Right cardiac atrium (tissue), 5 donors: ENCODE measurements at regions of chr20 and their contacts with region 1.

Region 1: GRCh38 chr20:37192137-37192854 is 12.9 kb upstream of the MROH8 start:
- DNase-seq: peak; percentile 90 to 96 (median 93)
- ATAC-seq: peak; percentile 89 to 90
- H3K4me3 ChIP-seq: no peak overlapping the region
- H3K27ac ChIP-seq: no peak overlapping the region
- H3K4me1 ChIP-seq: no peaks in the 10 kb centered on the region
- H3K27me3 ChIP-seq: no peaks in the 10 kb centered on the region

Region 2: DNA sequence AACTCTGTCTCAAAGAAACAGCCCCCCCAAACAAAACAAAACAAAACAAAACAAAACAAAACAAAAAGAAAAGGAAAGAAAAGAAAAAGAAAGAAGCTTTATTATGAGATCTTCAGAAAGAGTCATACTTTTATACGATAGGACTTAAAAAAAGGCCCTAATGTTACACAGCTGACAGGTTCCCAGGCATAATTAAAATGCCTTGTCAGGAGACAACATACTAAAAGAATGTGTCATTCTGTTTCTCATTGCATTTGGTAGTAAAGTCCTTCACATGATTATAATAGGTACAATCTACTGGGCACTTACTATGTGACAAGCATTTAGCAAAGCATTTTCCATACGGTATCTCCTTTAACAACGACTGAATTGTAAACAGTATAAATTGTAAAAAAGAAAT is 49.6 kb before region 1 on chr20:
- intact Hi-C with region 1: no loop called
- DNase-seq: no peak
- ATAC-seq: no peak
- H3K4me3 ChIP-seq: no peak overlapping the region
- H3K27ac ChIP-seq: no peak overlapping the region
- H3K4me1 ChIP-seq: no peaks in the 10 kb centered on the region
- H3K27me3 ChIP-seq: no peaks in the 10 kb centered on the region

Region 3: DNA sequence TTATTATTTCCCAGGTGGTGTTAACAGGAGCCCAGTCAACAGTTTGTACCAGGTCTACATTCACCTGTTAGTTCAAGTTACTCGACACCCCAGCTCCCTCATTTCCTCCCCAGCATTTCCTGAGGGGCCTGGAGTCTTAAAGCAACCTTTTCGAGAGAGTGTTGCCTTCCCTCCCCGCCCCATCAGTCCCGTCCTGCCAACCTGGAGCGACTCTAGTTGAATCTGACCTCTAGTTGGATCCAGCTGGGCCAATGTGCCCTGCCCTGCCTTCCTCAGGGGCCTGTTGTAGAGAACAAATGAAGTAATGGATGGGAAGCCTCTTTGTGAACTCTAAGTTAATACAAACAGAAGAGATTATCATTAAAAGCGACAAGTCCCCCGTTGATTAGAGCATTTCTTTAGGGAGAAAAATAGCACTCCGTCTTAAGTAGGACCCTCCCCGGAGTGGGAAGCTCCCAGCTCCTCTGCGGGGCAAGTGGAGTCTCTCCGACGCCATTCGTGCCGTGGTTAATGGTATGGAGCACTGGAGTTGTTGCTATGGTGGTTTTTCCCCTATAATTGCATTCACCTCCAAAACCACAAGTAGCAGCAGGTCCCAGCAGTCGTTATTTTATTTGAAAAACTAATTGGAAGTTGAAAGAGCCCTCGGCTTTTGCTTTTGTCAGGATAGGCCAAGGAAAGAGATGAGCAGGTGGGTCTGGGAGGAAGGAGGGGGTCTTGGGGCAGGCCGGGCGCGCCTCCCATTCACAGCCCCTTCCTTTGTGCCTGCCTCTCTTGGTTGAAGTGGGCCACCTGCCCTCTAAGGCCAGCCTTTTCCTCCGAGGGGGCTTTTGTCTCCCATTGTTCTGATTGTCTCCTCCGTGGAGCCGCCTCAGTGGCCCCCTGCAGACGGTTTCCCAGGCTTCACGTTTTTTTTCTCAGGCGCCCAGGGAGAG is 53.2 kb after region 1 on chr20:
- intact Hi-C with region 1: loop called in 1 of 4 experiments (anchors 5 kb)
- DNase-seq: no peak
- ATAC-seq: no peak
- H3K4me3 ChIP-seq: no peak overlapping the region
- H3K27ac ChIP-seq: no peak overlapping the region
- H3K4me1 ChIP-seq: peaks cover 5% of the 10 kb centered on the region
- H3K27me3 ChIP-seq: no peaks in the 10 kb centered on the region

Region 4: GRCh38 chr20:37365760-37366638 is 173.7 kb after region 1 on chr20:
- intact Hi-C with region 1: loop called in 1 of 4 experiments (anchors 10 kb)
- DNase-seq: no peak
- ATAC-seq: no peak
- H3K4me3 ChIP-seq: no peak overlapping the region
- H3K27ac ChIP-seq: no peak overlapping the region
- H3K4me1 ChIP-seq: no peaks in the 10 kb centered on the region
- H3K27me3 ChIP-seq: no peaks in the 10 kb centered on the region